Activated naive CD4-positive, alpha-beta T cell treated with anti-CD3 and anti-CD28 coated beads for 36 hours (primary cell): ENCODE measurements at regions of chr9 and their contacts with region 1.

Region 1: GRCh38 chr9:92764988-92765936 is 629 bp upstream of the BICD2 start:
- DNase-seq: peak; percentile 99
- H3K4me3 Mint-ChIP-seq: peak overlapping the region; percentile 84
- H3K27ac Mint-ChIP-seq: peak overlapping the region; percentile 91
- H3K4me1 Mint-ChIP-seq: peaks cover 49% of the 10 kb centered on the region
- H3K27me3 Mint-ChIP-seq: no peaks in the 10 kb centered on the region

Region 2: DNA sequence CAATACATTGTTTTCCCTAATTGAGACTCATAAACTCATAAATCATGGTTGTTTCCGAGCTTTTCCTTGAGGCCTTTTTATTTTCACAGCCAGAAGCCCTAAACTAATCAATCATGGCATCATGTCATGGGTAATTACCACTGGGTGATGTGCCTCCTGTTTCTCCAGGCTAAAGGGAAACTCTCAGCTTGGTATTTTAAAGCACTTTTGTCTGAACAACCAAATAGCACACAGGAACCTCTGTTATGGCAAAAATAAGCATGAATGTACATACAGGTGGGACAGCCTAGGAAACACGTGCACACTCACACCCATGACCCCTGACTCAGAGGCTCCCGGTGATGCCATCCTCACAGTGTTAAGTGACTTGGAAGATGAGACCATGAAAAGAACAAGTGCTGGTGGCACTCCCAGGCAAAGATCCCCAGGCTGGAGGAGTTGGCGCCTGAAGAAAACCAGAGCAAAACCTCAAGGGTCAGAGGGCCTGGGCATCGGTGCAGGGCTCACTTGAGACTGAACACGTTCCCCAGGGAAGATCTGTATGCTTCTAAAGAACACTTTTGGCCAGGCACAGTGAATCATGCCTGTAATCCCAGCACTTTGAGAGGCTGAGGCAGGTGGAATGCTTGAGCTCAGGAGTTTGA is 969.5 kb before region 1 on chr9:
- CTCF ChIA-PET with region 1: no interaction called
- intact Hi-C with region 1: no loop called
- DNase-seq: no peak
- H3K4me3 Mint-ChIP-seq: no peak overlapping the region
- H3K27ac Mint-ChIP-seq: no peak overlapping the region
- H3K4me1 Mint-ChIP-seq: peaks cover 9% of the 10 kb centered on the region
- H3K27me3 Mint-ChIP-seq: no peaks in the 10 kb centered on the region

Region 3: DNA sequence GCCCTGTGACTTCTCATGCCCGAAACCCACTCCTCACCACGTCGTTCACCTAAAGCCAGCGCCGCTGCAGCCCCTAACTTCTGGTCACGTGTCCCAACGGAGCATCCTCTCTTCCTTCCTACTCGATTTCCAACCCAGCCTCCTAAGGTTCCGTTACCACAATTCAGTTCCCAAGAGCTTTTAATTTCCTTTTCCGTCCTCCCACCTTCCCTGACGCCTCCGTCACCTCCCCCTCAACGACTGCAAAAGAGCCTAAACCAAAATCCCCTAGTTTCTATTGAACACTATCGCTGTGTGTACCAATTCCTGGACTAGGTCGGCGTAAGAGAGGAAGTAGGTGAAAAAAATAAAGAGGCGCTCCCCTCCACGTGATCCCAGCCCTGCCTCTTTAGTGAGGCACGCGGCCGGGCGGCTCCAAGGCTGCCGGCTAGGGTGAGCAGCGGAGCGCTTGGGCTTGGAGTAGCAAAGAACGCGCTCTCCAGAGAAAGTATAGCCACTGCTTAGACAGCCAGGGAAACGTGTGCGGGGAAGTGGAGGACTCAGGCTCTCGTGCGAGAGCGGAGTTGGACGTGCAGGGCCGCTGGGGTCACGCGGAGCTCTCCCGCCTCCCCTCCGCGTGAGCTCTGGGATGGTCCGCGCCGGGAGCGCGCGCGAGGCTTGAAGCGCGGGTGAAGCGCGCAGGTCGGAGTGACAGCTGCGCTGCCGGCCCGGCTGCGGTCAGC is 439.8 kb before region 1 on chr9 and contains the starts of genes CENPP and NOL8:
- CTCF ChIA-PET with region 1: no interaction called
- intact Hi-C with region 1: loop called (anchors 10 kb)
- DNase-seq: peak; percentile 88
- H3K4me3 Mint-ChIP-seq: peak within 1 kb of the TSS; percentile 99
- H3K27ac Mint-ChIP-seq: peak within 1 kb of the TSS; percentile 97
- H3K4me1 Mint-ChIP-seq: peaks cover 41% of the 10 kb centered on the region
- H3K27me3 Mint-ChIP-seq: no peaks in the 10 kb centered on the region
- total RNA-seq, gene CENPP: 24.9 to 26.5 TPM
- total RNA-seq, gene NOL8: 41.0 to 46.2 TPM

Region 4: GRCh38 chr9:92790542-92791527 is 25.6 kb after region 1 on chr9:
- CTCF ChIA-PET with region 1: interaction called, 5 read pairs
- intact Hi-C with region 1: loop called (anchors 1 kb)
- DNase-seq: peak; percentile 85
- H3K4me3 Mint-ChIP-seq: no peak overlapping the region
- H3K27ac Mint-ChIP-seq: no peak overlapping the region
- H3K4me1 Mint-ChIP-seq: peaks cover 3% of the 10 kb centered on the region
- H3K27me3 Mint-ChIP-seq: no peaks in the 10 kb centered on the region

Region 5: DNA sequence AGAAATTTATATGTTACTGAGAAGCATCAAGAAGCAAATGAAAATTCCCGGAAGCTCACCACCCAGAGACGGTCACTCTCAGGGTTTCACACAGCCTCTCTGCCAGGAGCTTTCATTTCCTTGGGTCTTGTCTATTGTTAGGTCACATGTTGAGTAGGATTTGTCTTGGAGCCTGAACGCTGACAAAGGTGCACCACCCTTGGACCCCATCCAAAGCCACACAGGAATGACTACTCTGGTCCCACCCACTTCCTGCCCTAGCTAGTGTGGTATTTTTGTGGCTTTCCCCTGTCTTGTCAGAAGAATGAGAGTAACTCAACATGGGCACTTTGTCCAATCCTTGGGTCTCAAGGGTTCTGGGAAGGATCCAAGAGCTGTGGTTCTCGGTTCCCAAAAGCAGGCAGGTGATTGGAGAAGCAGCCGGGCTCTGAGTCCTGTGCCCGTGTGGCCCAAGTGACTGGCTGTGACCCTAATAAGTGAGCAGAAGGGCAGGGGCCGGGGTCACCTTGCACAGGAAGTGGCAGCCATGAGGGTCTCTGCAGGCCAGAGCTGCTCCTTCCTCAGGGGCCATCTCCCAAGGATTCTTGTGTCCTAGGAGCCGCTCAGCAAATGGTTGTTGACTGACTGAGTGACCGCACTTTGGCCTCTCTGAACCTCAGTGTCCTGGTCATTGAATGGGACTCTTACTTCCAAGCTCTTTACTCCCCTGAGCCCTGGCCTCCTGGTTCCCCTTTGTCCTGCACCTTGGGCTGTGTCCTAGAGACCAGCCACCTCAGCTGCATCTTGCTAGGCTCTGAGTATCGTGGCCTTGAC is 189.0 kb after region 1 on chr9:
- CTCF ChIA-PET with region 1: interaction called, 5 read pairs
- intact Hi-C with region 1: loop called (anchors 2 kb)
- DNase-seq: peak; percentile 95
- H3K4me3 Mint-ChIP-seq: peak overlapping the region; percentile 60
- H3K27ac Mint-ChIP-seq: peak overlapping the region; percentile 91
- H3K4me1 Mint-ChIP-seq: peaks cover 75% of the 10 kb centered on the region
- H3K27me3 Mint-ChIP-seq: no peaks in the 10 kb centered on the region

Region 6: DNA sequence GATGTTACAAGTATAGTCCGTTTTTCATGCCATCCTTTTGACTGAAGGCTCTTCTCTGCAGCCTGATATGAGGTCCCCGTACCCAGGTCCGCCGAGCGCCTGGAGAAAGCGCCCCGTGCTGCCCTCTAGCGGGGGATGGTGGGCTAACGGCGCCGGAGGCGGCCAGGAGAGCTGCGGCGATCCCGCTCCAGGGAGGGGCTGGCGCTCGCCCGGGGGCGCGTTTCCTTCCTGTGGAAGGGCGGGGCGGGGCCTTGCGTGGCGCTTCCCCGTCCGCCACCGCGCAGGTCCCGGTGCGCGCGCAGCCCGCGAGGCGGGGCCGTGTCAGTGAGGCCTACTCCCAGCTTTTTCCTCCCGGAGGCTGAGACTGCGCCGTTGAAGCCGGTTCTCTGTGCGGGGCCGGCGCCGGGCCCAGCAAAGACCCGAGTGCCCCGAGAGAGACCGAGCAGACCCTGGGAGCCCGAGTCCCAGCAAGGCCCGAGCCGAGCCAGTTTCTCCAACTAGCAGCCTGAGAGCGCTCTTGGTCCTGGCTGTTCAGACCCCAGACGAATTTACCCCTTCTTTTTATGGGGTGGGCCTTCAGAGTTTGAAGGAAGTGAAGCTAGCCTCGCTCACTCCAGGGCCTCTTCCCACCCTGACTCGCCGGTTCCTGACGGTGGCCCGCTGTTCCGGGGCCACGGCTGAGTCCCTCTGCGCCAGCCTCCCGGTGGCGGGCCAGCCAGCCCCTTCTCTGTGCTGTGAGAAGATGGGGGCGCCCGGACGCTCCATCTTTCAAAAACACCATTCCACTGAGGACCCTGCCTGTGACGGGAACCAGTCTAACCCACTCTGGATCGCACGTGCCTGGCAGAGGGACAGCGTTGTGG is 801.4 kb after region 1 on chr9:
- CTCF ChIA-PET with region 1: no interaction called
- intact Hi-C with region 1: loop called (anchors 1 kb)
- DNase-seq: peak; percentile 99
- H3K4me3 Mint-ChIP-seq: peak overlapping the region; percentile 90
- H3K27ac Mint-ChIP-seq: peak overlapping the region; percentile 92
- H3K4me1 Mint-ChIP-seq: peaks cover 26% of the 10 kb centered on the region
- H3K27me3 Mint-ChIP-seq: no peaks in the 10 kb centered on the region